Activated naive CD4-positive, alpha-beta T cell treated with anti-CD3 and anti-CD28 coated beads for 36 hours (primary cell): ENCODE measurements at regions of chr6 and their contacts with region 1.

Region 1: DNA sequence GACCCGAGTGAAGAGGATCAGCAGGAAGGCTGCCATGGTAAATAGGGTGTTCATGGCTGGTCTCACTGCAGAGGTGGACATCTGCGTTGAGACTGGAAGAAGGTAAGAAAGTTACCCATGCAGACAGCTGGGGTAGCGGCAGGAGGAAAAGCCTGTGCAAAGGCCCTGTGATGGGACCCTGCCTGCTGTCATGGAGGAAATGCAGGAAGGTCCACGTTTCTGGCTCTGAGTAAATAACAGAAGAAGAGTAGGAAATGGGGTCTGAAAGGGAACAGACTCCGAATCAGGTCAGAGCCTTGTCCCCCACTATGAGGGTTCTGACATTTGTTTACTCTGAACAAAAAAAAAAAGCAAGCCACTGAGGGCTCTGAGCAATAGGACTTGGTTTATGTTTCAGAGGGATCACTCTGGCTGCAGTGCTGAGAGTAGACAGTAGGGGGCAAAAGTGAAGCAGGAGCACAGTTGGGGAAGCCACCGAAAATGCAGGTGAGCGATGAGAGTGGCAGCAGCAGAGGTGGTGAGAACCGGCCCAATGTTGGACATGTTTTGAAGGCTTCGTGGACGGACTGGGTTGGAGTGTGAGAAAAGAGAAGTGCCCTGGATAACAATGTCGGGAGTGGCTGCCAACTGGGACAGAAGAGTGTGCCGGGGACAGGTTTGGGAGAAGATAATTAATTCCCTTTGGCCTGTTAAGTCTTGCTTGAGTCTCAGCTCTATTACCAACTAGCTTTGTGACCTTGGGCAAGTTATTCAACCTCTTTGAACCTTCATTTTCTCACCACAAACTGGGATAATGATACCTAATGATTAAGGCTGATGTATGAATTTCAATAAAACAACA is 57.9 kb upstream of the MAP7 start:
- DNase-seq: peak; percentile 92
- H3K4me3 Mint-ChIP-seq: no peak overlapping the region
- H3K27ac Mint-ChIP-seq: no peak overlapping the region
- H3K4me1 Mint-ChIP-seq: peaks cover 12% of the 10 kb centered on the region
- H3K27me3 Mint-ChIP-seq: no peaks in the 10 kb centered on the region

Region 2: GRCh38 chr6:136566007-136566496 is 42.1 kb before region 1 on chr6:
- CTCF ChIA-PET with region 1: no interaction called
- intact Hi-C with region 1: no loop called
- DNase-seq: no peak
- H3K4me3 Mint-ChIP-seq: no peak overlapping the region
- H3K27ac Mint-ChIP-seq: no peak overlapping the region
- H3K4me1 Mint-ChIP-seq: no peaks in the 10 kb centered on the region
- H3K27me3 Mint-ChIP-seq: no peaks in the 10 kb centered on the region

Region 3: GRCh38 chr6:136582711-136583471 is 25.3 kb before region 1 on chr6:
- CTCF ChIA-PET with region 1: interaction called, 4 read pairs
- intact Hi-C with region 1: loop called (anchors 1 kb)
- DNase-seq: no peak
- H3K4me3 Mint-ChIP-seq: no peak overlapping the region
- H3K27ac Mint-ChIP-seq: no peak overlapping the region
- H3K4me1 Mint-ChIP-seq: no peaks in the 10 kb centered on the region
- H3K27me3 Mint-ChIP-seq: no peaks in the 10 kb centered on the region

Region 4: DNA sequence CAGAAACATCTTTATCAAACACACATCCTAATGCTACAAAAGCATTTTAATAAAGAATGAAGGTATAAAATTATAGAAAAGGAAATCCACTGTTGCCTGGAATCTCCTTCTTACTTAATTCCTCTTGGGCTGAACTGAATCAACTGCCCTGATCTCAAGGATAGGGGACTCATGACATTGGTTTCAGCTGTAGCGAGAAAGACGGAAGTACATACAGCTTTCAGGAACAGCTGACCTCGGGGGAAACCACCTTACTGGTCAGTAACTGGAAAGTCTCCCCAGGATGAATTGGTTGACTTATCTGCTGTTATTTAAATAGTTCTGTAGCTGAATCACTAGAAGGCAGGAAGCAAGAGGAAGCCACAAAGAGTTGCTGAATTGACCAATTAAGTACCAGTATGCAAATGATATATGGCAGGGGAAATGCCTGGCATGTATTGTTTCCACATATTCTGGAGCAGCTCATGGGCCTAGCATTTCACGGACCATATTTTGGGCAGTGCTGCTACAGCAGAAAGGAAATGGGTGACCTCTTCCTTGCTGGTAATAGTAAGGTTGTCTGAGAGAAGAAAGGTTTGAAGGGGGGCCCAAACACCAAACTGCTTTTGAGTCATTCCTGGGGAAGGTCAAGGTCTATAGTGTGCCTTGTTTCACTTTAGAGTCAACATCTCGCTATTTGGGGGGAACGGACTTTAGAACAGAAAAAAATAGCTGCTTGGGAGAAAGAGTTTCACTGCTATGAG is 14.2 kb before region 1 on chr6:
- CTCF ChIA-PET with region 1: interaction called, 3 read pairs
- intact Hi-C with region 1: loop called (anchors 1 kb)
- DNase-seq: peak; percentile 79
- H3K4me3 Mint-ChIP-seq: peak overlapping the region; percentile 27
- H3K27ac Mint-ChIP-seq: peak overlapping the region; percentile 83
- H3K4me1 Mint-ChIP-seq: peaks cover 19% of the 10 kb centered on the region
- H3K27me3 Mint-ChIP-seq: no peaks in the 10 kb centered on the region

Region 5: GRCh38 chr6:136701045-136701444 is 92.9 kb after region 1 on chr6:
- CTCF ChIA-PET with region 1: no interaction called
- intact Hi-C with region 1: no loop called
- DNase-seq: no peak
- H3K4me3 Mint-ChIP-seq: no peak overlapping the region
- H3K27ac Mint-ChIP-seq: no peak overlapping the region
- H3K4me1 Mint-ChIP-seq: peaks cover 17% of the 10 kb centered on the region
- H3K27me3 Mint-ChIP-seq: no peaks in the 10 kb centered on the region

Region 6: DNA sequence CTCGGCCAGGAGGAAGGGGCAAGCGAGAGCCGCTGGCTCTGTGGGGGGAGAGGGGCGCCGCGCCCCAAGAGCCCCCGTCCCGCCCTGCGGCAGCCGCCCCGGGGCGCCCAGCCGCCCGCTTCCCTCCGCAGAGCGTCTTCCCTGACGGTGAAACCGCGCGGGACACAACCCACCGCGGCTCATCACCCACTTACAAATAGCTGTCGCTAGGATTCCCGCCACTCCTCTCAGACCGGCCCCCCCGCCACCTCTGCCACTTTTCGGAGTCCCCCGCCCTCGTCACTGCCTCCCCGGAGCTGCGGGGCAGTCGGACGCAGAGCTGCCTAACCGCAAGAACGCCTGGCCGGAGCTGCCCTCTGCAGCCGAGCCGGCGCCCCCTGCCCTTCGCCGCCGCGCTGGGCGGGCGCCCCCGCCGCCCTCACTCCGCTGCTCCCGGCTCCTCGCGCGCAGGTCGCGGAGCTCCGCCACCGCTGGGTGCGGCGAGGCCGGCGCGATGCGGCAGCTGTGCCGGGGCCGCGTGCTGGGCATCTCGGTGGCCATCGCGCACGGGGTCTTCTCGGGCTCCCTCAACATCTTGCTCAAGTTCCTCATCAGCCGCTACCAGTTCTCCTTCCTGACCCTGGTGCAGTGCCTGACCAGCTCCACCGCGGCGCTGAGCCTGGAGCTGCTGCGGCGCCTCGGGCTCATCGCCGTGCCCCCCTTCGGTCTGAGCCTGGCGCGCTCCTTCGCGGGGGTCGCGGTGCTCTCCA is 314.0 kb after region 1 on chr6 and contains the start of gene SLC35D3:
- CTCF ChIA-PET with region 1: no interaction called
- intact Hi-C with region 1: loop called (anchors 2 kb)
- DNase-seq: peak; percentile 30
- H3K4me3 Mint-ChIP-seq: peak within 1 kb of the TSS; percentile 67
- H3K27ac Mint-ChIP-seq: no peak within 1 kb of the TSS
- H3K4me1 Mint-ChIP-seq: peaks cover 24% of the 10 kb centered on the region
- H3K27me3 Mint-ChIP-seq: peaks cover 56% of the 10 kb centered on the region
- total RNA-seq, gene SLC35D3: not detected